Transverse colon (tissue), 4 donors: ENCODE measurements at regions of chr1 and their contacts with region 1.

Region 1: DNA sequence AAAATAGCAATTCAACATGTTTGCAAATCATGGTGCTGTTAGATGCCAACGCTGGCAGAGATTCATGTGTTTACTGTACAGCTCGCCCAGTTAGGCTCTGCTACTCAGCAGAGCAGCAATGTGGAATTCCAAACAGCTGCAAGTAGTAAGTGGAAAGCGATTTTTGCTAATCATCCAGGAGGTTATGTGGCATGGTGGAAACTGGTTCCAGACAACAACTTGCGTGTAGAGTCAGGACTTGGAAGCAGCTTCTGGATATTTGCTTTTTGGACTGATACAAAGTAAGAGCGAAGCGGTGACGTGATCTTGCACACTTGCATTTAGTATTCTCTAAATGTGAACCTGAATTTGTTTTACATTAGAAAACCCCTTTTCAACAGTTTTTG is 27.1 kb upstream of the HHAT start:
- DNase-seq: no peak
- H3K4me3 ChIP-seq: no peak overlapping the region
- H3K27ac ChIP-seq: no peak overlapping the region
- H3K4me1 ChIP-seq: no peaks in the 10 kb centered on the region
- H3K27me3 ChIP-seq: peaks cover 5% of the 10 kb centered on the region
- CTCF ChIP-seq: no peak
- EP300 ChIP-seq: no peak
- POLR2A ChIP-seq: no peak

Region 2: DNA sequence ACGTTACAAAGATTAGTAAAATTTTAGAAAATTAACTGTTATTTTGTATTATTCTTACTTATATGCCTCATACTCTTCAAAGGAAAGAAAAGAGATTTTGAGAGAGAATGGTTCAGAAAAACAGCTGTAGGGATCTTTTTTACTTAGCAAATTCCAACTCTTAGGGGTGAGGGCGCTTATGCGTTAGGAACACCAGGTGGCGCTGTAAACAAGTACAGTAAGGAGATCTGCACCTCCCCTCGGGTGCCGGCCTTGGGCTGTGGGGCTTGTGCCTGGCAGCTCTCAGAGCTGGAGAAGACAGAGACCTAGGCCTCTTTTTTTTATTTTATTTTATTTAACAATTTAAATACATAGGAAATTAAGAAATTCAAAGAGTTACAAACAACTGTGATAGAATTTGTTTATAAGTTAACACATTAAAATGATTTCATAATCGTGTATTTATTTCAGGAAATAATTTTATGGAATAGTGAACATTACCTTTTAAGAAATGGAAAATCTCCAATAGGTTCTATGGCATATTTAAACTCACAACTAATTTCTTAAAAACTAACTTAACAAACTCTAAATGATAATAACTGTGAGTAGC is 441.2 kb before region 1 on chr1:
- in situ Hi-C with region 1: loop called in 1 of 4 experiments (anchors 25 kb)
- intact Hi-C with region 1: no loop called
- DNase-seq: peak; percentile 73
- H3K4me3 ChIP-seq: no peak overlapping the region
- H3K27ac ChIP-seq: no peak overlapping the region
- H3K4me1 ChIP-seq: no peaks in the 10 kb centered on the region
- H3K27me3 ChIP-seq: peaks cover 17% of the 10 kb centered on the region
- CTCF ChIP-seq: peak; percentile 65 to 91 (median 86)
- EP300 ChIP-seq: no peak
- POLR2A ChIP-seq: no peak

Region 3: DNA sequence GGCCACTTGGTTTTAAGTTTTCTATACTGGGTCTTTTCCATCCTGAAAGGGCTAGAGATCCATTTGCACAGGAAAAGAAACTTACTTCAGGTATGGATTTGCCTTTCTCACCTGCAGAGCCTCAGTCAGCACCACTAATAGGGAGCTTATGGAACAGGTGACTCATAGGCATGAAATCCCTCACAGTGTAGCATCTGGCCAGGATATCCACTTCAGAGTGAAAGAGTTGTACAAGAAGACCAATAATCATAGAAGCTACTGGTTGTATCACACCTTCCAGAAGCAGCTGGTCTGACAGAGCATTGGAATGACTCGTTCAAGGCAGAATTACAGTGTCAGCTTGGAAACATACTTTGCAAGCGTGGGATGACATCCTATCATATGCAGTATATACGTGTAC is 389.9 kb before region 1 on chr1:
- in situ Hi-C with region 1: no loop called
- intact Hi-C with region 1: no loop called
- DNase-seq: no peak
- H3K4me3 ChIP-seq: no peak overlapping the region
- H3K27ac ChIP-seq: no peak overlapping the region
- H3K4me1 ChIP-seq: no peaks in the 10 kb centered on the region
- H3K27me3 ChIP-seq: no peaks in the 10 kb centered on the region
- CTCF ChIP-seq: no peak
- EP300 ChIP-seq: no peak
- POLR2A ChIP-seq: no peak

Region 4: DNA sequence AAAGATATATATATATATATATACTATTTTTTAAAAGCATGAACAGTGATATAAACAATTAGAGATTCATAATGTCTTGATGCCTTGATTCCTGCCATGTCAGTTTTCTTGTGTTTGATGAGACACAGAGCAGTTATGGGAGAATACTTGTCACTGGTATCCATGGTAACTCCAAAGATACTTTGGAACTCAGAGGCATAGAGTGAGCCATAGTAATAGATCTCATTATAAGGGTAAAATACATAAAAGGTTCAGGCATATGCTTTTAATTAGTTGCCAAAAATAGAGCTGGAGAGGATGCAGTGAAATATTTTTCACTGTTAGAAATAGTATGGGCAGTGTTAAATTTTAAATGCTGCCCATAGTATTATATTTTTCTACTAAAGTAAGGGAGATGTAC is 229.5 kb before region 1 on chr1:
- in situ Hi-C with region 1: no loop called
- intact Hi-C with region 1: no loop called
- DNase-seq: no peak
- H3K4me3 ChIP-seq: no peak overlapping the region
- H3K27ac ChIP-seq: no peak overlapping the region
- H3K4me1 ChIP-seq: no peaks in the 10 kb centered on the region
- H3K27me3 ChIP-seq: no peaks in the 10 kb centered on the region
- CTCF ChIP-seq: no peak
- EP300 ChIP-seq: no peak
- POLR2A ChIP-seq: no peak

Region 5: DNA sequence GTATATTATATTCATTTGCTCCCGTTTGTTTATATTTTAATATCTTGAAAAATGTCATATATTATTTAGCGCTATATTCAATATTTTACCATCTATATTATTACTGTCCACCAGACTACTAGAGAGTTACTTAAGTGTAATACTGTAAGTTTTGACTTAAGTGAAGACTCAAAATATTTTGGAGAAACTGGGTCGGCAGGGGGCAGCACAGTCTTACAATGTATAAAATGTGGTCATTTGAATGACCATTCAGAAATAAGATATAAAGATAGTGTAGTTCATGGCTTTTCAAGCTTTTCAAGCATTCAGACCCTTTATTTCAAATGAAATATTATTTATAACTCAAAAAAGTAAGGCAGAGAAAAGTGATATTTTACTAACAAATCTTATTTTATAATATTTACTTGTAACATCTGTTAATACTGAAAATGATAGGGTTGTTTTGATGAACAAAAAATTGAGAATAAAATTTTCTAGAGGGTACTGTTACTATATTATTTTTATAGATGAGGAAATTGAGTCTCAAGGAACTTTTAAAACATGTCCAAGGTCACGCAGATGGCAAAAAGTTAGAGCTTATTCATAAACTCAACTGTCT is 158.0 kb before region 1 on chr1:
- in situ Hi-C with region 1: loop called in 2 of 4 experiments (anchors 10 to 25 kb)
- intact Hi-C with region 1: no loop called
- DNase-seq: peak; percentile 77
- H3K4me3 ChIP-seq: no peak overlapping the region
- H3K27ac ChIP-seq: no peak overlapping the region
- H3K4me1 ChIP-seq: no peaks in the 10 kb centered on the region
- H3K27me3 ChIP-seq: no peaks in the 10 kb centered on the region
- CTCF ChIP-seq: peak; percentile 60 to 68 (median 64)
- EP300 ChIP-seq: no peak
- POLR2A ChIP-seq: no peak

Region 6: GRCh38 chr1:210214573-210215409 is 86.8 kb before region 1 on chr1:
- in situ Hi-C with region 1: no loop called
- intact Hi-C with region 1: loop called (anchors 5 kb)
- DNase-seq: peak; percentile 15
- H3K4me3 ChIP-seq: no peak overlapping the region
- H3K27ac ChIP-seq: peak overlapping the region in 1 of 4 donors; percentile 25
- H3K4me1 ChIP-seq: peaks cover 0 to 5% (median 2%) of the 10 kb centered on the region in 4 donors
- H3K27me3 ChIP-seq: no peaks in the 10 kb centered on the region
- CTCF ChIP-seq: peak in 1 of 5 experiments; percentile 12
- EP300 ChIP-seq: no peak
- POLR2A ChIP-seq: no peak